CD8-positive, alpha-beta T cell (primary cell): ENCODE measurements at regions of chr1 and their contacts with region 1.

Region 1: DNA sequence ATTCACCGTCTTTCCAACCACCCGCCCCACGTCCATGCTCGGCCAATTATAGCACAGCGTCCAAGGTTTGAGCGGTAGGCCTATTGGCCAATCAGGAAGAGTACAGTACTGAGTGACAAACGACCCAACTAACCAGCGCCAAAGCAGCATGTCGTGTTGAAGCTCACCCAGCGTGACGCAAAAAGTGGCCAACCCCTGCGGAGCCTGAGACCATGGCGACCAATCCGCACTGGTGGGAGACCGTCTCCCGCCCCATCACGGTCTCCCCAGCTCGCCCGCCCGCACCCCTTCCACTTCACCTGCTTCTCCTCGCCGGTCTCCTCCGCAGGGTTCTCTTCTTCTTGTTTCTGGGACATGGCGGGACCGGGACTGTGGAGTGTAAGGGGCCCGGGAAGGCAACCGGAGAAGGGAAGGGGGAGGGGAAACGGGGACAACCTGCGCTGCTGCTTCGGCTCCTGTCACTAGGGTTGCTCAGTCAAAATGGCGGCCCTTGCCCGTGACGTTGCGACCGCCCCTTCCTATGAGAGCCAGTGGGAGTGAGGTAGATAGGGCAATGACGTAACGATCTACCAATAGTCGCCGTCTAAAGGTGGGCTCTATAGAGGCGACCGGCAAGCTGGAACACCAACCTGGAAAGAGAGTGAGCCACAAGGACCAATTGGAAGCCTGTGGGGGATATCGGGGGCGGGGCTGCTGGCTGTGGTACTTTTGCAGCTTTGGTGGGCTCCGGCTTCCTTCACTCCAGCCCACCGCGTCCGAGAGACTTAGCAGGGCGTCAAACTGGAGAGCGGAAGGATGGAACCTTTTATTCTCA is at the start of gene ENSA:
- DNase-seq: peak; percentile 88 to 100 (median 94)
- ATAC-seq: peak; percentile 84
- H3K4me3 ChIP-seq: peak within 1 kb of the TSS; percentile 79 to 90
- H3K4me3 Mint-ChIP-seq: no peak within 1 kb of the TSS
- H3K27ac ChIP-seq: peak within 1 kb of the TSS; percentile 94 to 100
- H3K27ac Mint-ChIP-seq: no peak within 1 kb of the TSS
- H3K4me1 ChIP-seq: peaks cover 17% of the 10 kb centered on the region
- H3K4me1 Mint-ChIP-seq: peaks cover 15% of the 10 kb centered on the region
- H3K27me3 ChIP-seq: no peaks in the 10 kb centered on the region
- H3K27me3 Mint-ChIP-seq: no peaks in the 10 kb centered on the region
- CTCF ChIP-seq: no peak
- total RNA-seq, gene ENSA: 140 to 141 TPM

Region 2: GRCh38 chr1:150061632-150062101 is 567.7 kb before region 1 on chr1:
- CTCF ChIA-PET with region 1: no interaction called
- POLR2A ChIA-PET with region 1: no interaction called
- intact Hi-C with region 1: no loop called
- DNase-seq: no peak
- ATAC-seq: no peak
- H3K4me3 ChIP-seq: no peak overlapping the region
- H3K4me3 Mint-ChIP-seq: no peak overlapping the region
- H3K27ac ChIP-seq: no peak overlapping the region
- H3K27ac Mint-ChIP-seq: no peak overlapping the region
- H3K4me1 ChIP-seq: no peaks in the 10 kb centered on the region
- H3K4me1 Mint-ChIP-seq: peaks cover 8% of the 10 kb centered on the region
- H3K27me3 ChIP-seq: no peaks in the 10 kb centered on the region
- H3K27me3 Mint-ChIP-seq: no peaks in the 10 kb centered on the region
- CTCF ChIP-seq: no peak

Region 3: DNA sequence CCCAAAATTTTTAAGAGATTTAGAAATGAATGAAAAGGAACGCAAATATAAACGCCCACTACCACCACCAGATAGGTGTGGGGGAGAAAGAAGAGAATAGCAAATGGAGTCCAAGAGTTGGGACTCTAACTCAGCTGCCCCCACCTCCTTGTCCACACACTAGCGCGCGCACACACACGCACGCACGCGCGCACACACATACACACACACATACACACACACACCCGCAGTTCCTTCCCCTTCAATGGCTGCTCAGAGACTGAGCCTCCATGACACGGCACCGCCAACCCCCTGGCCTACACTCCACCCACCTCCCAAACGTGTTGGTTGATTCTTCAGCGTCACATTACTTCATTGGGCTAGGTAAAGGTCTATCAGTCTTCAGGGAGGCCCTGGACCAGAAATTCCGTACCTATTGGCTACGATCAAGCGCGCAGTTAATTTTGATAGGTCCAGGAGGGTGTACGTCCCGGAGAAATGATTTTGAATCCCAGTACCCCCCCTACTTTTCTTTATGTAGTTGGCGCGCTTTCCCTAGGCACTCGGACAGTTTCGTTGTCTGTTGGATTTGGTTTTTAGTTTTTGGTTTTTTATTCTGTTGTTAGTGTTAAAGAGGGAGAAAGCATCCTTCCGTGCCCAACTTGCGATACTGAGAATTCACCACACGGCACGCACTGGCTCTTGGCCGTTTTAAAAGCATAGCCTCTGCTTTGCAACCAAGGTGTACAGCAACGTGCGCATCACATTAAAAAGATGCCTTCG is 393.3 kb before region 1 on chr1 and contains the start of gene ANP32E:
- CTCF ChIA-PET with region 1: no interaction called
- POLR2A ChIA-PET with region 1: no interaction called
- intact Hi-C with region 1: loop called (anchors 1 to 5 kb)
- DNase-seq: peak; percentile 86 to 99 (median 94)
- ATAC-seq: peak; percentile 90
- H3K4me3 ChIP-seq: peak within 1 kb of the TSS; percentile 72 to 80
- H3K4me3 Mint-ChIP-seq: no peak within 1 kb of the TSS
- H3K27ac ChIP-seq: peak within 1 kb of the TSS; percentile 89 to 96
- H3K27ac Mint-ChIP-seq: peak within 1 kb of the TSS; percentile 93
- H3K4me1 ChIP-seq: peaks cover 12% of the 10 kb centered on the region
- H3K4me1 Mint-ChIP-seq: peaks cover 18% of the 10 kb centered on the region
- H3K27me3 ChIP-seq: no peaks in the 10 kb centered on the region
- H3K27me3 Mint-ChIP-seq: no peaks in the 10 kb centered on the region
- CTCF ChIP-seq: no peak
- total RNA-seq, gene ANP32E: 30.6 to 35.0 TPM

Region 4: DNA sequence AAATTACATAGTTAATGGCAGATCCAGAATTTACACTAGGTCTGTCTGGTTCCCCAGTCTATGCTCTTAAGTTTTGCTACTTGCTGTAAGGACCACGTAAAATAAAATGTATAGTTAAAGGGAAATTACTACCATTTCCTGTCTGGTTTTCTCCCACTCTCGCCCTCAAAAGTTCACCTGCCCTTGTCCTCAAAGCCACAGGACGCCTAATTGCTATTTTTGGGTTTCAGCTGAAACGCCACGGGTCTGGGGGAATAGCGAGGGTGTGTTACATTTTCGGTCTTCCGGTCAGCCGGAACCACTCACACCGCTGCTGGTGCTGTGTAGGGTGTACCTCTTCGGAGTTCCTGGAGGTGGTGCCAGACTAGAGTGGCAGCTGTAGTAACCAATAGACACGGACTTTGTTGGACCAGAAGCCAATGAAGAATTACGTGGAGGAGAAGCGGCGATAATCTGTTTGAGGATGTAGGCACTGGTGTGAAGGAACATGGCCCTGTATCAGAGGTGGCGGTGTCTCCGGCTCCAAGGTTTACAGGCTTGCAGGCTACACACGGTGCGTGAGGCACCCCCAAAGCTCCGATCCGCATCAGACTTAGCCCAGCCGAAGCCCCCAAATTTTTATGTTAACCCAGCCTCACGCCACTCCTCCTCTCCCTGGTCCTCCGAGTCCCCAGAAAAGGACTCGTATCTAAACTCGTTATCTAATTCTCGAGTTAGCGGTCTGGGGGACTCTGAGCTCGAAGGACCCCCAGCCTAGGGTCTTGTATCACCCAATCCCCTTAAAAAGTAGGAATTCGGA is 142.2 kb before region 1 on chr1 and contains the start of gene TARS2:
- CTCF ChIA-PET with region 1: no interaction called
- POLR2A ChIA-PET with region 1: interaction called, 5 read pairs
- intact Hi-C with region 1: loop called (anchors 1 kb)
- DNase-seq: peak; percentile 87 to 97 (median 94)
- ATAC-seq: peak; percentile 100
- H3K4me3 ChIP-seq: peak within 1 kb of the TSS; percentile 86 to 97
- H3K4me3 Mint-ChIP-seq: peak within 1 kb of the TSS; percentile 100
- H3K27ac ChIP-seq: peak within 1 kb of the TSS; percentile 81
- H3K27ac Mint-ChIP-seq: peak within 1 kb of the TSS; percentile 99
- H3K4me1 ChIP-seq: peaks cover 9% of the 10 kb centered on the region
- H3K4me1 Mint-ChIP-seq: peaks cover 18% of the 10 kb centered on the region
- H3K27me3 ChIP-seq: no peaks in the 10 kb centered on the region
- H3K27me3 Mint-ChIP-seq: no peaks in the 10 kb centered on the region
- CTCF ChIP-seq: no peak
- total RNA-seq, gene TARS2: 19.4 to 28.8 TPM

Region 5: GRCh38 chr1:150561974-150562445 is 67.3 kb before region 1 on chr1:
- CTCF ChIA-PET with region 1: interaction called, 799 read pairs
- POLR2A ChIA-PET with region 1: interaction called, 67 read pairs
- intact Hi-C with region 1: loop called in 1 of 2 experiments (anchors 2 kb)
- DNase-seq: peak; percentile 60 to 90 (median 83)
- ATAC-seq: peak; percentile 38
- H3K4me3 ChIP-seq: peak overlapping the region; percentile 82 to 89
- H3K4me3 Mint-ChIP-seq: peak overlapping the region; percentile 95
- H3K27ac ChIP-seq: peak overlapping the region; percentile 90 to 94
- H3K27ac Mint-ChIP-seq: peak overlapping the region; percentile 100
- H3K4me1 ChIP-seq: peaks cover 61% of the 10 kb centered on the region
- H3K4me1 Mint-ChIP-seq: peaks cover 56% of the 10 kb centered on the region
- H3K27me3 ChIP-seq: no peaks in the 10 kb centered on the region
- H3K27me3 Mint-ChIP-seq: no peaks in the 10 kb centered on the region
- CTCF ChIP-seq: no peak

Region 6: DNA sequence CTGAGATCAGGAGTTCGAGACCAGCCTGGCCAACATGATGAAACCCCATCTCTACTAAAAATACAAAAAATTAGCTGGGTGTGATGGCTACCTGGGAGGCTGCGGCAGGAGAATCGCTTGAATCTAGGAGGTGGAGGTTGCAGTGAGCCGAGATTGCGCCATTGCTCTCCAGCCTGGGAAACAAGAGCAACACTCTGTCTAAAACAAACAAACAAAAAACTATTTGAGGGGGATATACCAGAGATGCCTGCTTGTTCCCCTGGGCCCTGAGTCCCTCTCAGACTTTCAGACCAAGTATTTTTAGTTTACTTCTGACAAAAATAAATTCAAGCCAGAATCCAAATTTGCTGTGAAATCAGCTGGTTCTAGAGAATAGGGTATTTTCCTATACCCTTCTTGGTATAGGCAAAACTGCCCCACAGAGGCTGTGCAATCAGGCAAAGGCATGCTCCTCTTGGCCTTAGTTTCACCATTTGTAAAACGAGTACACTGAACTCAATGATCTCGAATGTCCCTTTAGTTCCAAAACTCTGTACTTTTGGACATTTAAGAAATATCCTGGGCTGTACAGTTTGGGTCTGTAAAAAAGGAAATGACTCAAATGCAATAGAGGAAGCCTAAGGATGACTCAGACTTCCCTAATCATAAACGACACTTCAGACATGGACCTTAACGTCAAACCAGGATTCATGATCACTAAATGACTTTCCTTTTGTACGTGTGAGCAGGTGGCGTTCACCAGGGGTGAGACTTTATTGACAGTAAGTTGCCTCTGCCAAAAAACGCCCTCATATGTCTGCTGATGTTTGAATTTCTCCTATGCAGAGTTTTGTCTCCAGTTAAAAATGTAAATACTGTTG is 16.0 kb before region 1 on chr1:
- CTCF ChIA-PET with region 1: no interaction called
- POLR2A ChIA-PET with region 1: interaction called, 5 read pairs
- intact Hi-C with region 1: loop called (anchors 1 kb)
- DNase-seq: peak in 6 of 9 experiments; percentile 22 to 89 (median 60)
- ATAC-seq: peak; percentile 32
- H3K4me3 ChIP-seq: no peak overlapping the region
- H3K4me3 Mint-ChIP-seq: peak overlapping the region; percentile 9
- H3K27ac ChIP-seq: peak overlapping the region in 1 of 2 experiments; percentile 95
- H3K27ac Mint-ChIP-seq: peak overlapping the region; percentile 83
- H3K4me1 ChIP-seq: peaks cover 33% of the 10 kb centered on the region
- H3K4me1 Mint-ChIP-seq: peaks cover 55% of the 10 kb centered on the region
- H3K27me3 ChIP-seq: no peaks in the 10 kb centered on the region
- H3K27me3 Mint-ChIP-seq: no peaks in the 10 kb centered on the region
- CTCF ChIP-seq: no peak

Region 7: GRCh38 chr1:150730130-150730721 is 100.9 kb after region 1 on chr1:
- CTCF ChIA-PET with region 1: no interaction called
- POLR2A ChIA-PET with region 1: no interaction called
- intact Hi-C with region 1: no loop called
- DNase-seq: no peak
- ATAC-seq: no peak
- H3K4me3 ChIP-seq: no peak overlapping the region
- H3K4me3 Mint-ChIP-seq: no peak overlapping the region
- H3K27ac ChIP-seq: no peak overlapping the region
- H3K27ac Mint-ChIP-seq: peak overlapping the region; percentile 49
- H3K4me1 ChIP-seq: no peaks in the 10 kb centered on the region
- H3K4me1 Mint-ChIP-seq: no peaks in the 10 kb centered on the region
- H3K27me3 ChIP-seq: no peaks in the 10 kb centered on the region
- H3K27me3 Mint-ChIP-seq: no peaks in the 10 kb centered on the region
- CTCF ChIP-seq: no peak

Region 8: DNA sequence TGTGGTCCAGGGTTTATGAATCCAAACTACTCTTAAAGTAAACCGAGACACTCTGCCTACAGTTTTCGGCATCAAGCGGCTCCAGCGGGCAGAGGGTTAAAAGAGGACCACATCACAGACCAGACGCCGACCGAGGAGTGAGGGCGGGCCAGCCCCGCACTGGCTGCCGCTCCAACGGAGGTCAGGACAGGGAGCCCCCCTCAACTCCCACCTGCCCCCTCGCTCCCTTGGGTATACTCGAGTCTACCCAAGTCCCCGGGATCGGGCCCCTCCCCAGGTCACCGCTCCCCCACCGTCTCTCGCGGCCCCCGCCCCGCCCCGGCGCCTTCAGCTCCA is 246.8 kb after region 1 on chr1:
- CTCF ChIA-PET with region 1: no interaction called
- POLR2A ChIA-PET with region 1: no interaction called
- intact Hi-C with region 1: loop called in 1 of 2 experiments (anchors 1 kb)
- DNase-seq: peak in 1 of 9 experiments; percentile 42
- ATAC-seq: peak; percentile 42
- H3K4me3 ChIP-seq: peak overlapping the region; percentile 86 to 97
- H3K4me3 Mint-ChIP-seq: peak overlapping the region; percentile 89
- H3K27ac ChIP-seq: peak overlapping the region; percentile 61 to 76
- H3K27ac Mint-ChIP-seq: peak overlapping the region; percentile 93
- H3K4me1 ChIP-seq: peaks cover 20% of the 10 kb centered on the region
- H3K4me1 Mint-ChIP-seq: peaks cover 29% of the 10 kb centered on the region
- H3K27me3 ChIP-seq: no peaks in the 10 kb centered on the region
- H3K27me3 Mint-ChIP-seq: no peaks in the 10 kb centered on the region
- CTCF ChIP-seq: no peak